Cardiac septum (tissue), 1 donor: ENCODE measurements at regions of chr12 and their contacts with region 1.

Region 1: GRCh38 chr12:54005853-54006686 is 2.7 kb upstream of the HOXC8 start:
- DNase-seq: peak; percentile 94

Region 2: DNA sequence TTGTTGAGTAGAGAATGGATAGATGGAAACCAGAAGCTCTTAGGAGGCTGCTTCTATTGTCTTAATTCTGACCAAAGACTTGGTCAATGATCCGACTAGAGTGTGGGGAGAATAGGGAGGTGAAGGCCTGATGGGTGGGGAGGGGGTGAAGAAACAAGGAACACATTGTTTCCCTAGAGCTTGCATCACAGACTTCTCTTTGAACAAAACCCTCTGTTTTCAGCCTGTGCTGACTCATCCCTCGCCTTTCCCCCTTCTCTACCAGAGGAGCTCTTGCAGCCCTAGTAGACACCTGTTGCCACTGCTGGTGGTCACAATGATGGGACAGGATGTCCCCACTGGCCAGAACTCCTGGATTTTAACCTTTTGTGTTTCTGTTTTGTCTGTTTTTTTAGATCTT is 207.5 kb before region 1 on chr12:
- intact Hi-C with region 1: no loop called
- DNase-seq: no peak

Region 3: GRCh38 chr12:54201001-54201794 is 195.1 kb after region 1 on chr12:
- intact Hi-C with region 1: loop called (anchors 2 kb)
- DNase-seq: peak; percentile 85